ENCODE measurements at regions of chr6 and their contacts with region 1.

Region 1: GRCh38 chr6:108250240-108250866 is 10.5 kb downstream of the SNX3 start:
- DNase-seq: no peak
- ATAC-seq: peak; percentile 65
- H3K4me3 Mint-ChIP-seq: no peak overlapping the region
- H3K27ac Mint-ChIP-seq: peak overlapping the region; percentile 5
- H3K4me1 Mint-ChIP-seq: peaks cover 84% of the 10 kb centered on the region
- H3K27me3 Mint-ChIP-seq: no peaks in the 10 kb centered on the region
- CTCF ChIP-seq: no peak

Region 2: GRCh38 chr6:108145639-108146038 is 104.7 kb before region 1 on chr6:
- CTCF ChIA-PET with region 1: no interaction called
- POLR2A ChIA-PET with region 1: interaction called, 10 read pairs
- intact Hi-C with region 1: no loop called
- DNase-seq: no peak
- ATAC-seq: no peak
- H3K4me3 Mint-ChIP-seq: no peak overlapping the region
- H3K27ac Mint-ChIP-seq: no peak overlapping the region
- H3K4me1 Mint-ChIP-seq: peaks cover 10% of the 10 kb centered on the region
- H3K27me3 Mint-ChIP-seq: peaks cover 21% of the 10 kb centered on the region
- CTCF ChIP-seq: no peak

Region 3: GRCh38 chr6:108274546-108274945 is 24.2 kb after region 1 on chr6:
- CTCF ChIA-PET with region 1: no interaction called
- POLR2A ChIA-PET with region 1: no interaction called
- intact Hi-C with region 1: no loop called
- DNase-seq: no peak
- ATAC-seq: no peak
- H3K4me3 Mint-ChIP-seq: no peak overlapping the region
- H3K27ac Mint-ChIP-seq: no peak overlapping the region
- H3K4me1 Mint-ChIP-seq: no peaks in the 10 kb centered on the region
- H3K27me3 Mint-ChIP-seq: no peaks in the 10 kb centered on the region
- CTCF ChIP-seq: no peak

Region 4: DNA sequence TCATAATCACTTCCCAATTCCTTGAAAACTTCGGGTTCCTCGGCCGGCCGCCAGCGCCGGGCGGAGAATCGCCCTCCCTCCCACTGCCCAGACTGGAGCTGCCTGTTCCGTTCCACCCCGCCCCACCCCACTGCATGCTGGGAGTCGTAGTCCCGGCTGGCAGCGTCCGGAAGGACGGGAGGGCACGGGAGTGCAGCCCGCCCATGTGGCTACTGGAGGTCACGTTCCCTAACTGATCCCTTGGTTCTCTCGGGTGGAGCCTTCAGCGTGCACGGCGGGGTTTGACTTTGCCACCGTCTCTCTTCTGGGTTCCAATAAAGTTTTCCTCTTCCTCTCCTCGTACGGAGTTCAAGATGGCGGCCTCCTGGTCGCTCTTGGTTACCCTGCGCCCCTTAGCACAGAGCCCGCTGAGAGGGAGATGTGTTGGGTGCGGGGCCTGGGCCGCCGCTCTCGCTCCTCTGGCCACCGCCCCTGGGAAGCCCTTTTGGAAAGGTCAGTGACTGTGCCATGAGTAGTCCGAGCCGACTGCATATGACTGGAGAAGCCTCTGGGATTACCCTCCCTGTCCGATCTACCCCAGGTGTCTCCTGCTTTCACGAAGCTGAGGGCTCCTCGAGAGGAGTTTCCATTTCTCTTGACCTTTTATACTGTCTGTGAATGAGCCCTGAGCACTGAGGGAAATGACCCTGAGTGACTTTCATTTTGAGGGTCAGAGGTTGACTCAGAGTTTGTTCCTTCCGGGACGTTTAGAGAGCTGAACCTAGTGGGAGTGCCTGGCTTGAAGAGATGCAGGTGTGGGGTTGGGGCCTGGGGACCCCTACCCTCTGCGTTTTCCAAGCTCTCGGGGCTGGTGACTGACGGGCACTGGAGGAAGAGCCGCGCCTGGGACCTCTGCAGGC is 44.6 kb after region 1 on chr6 and contains the start of gene AFG1L:
- CTCF ChIA-PET with region 1: no interaction called
- POLR2A ChIA-PET with region 1: interaction called, 11 read pairs
- intact Hi-C with region 1: no loop called
- DNase-seq: peak; percentile 89
- ATAC-seq: peak; percentile 92
- H3K4me3 Mint-ChIP-seq: peak within 1 kb of the TSS; percentile 99
- H3K27ac Mint-ChIP-seq: peak within 1 kb of the TSS; percentile 100
- H3K4me1 Mint-ChIP-seq: peaks cover 30% of the 10 kb centered on the region
- H3K27me3 Mint-ChIP-seq: no peaks in the 10 kb centered on the region
- CTCF ChIP-seq: no peak
- total RNA-seq, gene AFG1L: 7.5 and 10.3 TPM in 2 replicates

Region 5: DNA sequence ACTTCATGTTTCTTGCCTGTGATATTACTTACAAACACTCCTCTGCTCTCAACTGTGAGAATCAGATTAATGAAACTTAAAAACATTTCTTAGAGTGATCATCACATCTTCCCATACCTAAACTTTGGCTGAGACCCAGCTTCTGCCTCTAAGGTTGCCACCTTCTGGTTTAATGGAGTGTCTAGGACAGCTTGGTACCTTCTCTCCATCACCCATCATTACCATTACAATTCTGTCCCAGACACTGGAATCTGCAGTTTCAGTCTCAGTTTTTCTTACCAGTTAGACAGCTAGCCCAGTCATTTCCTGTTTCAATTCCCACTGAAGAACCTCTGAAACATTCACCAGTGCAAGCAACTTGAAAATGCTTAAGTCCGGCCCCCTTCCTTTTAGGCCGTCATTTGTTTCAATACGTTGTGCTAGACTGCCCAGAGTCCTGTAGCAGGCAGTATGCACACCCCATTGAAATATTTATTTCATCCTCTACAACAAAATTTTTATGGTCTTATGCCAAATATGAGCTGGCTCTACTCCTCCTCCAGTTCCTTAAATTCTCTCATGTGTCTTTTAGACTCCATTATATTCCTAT is 203.3 kb after region 1 on chr6:
- CTCF ChIA-PET with region 1: no interaction called
- POLR2A ChIA-PET with region 1: no interaction called
- intact Hi-C with region 1: loop called (anchors 1 kb)
- DNase-seq: no peak
- ATAC-seq: peak; percentile 73
- H3K4me3 Mint-ChIP-seq: peak overlapping the region; percentile 32
- H3K27ac Mint-ChIP-seq: peak overlapping the region; percentile 70
- H3K4me1 Mint-ChIP-seq: peaks cover 8% of the 10 kb centered on the region
- H3K27me3 Mint-ChIP-seq: no peaks in the 10 kb centered on the region
- CTCF ChIP-seq: no peak

Region 6: DNA sequence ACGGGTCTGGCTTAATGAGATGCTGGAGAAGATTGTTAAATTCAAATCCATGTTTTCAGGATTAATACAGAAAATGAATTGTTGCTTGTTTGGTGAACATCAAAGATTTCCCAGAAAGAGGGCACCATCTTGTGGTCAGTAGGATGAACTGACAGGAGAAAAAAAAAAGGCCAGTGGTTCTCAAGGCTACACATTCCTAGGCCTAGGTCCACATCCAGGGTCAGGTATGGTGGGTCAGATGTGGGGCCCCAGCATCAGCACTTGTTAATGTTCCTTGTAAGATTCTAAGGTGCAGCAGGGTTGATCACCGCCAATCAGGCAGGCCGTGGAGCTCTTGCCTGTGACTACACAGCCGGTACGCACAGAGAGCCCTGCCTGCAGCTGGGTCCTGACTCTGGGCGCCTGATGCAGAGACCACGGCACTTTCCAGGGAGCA is 276.4 kb after region 1 on chr6:
- CTCF ChIA-PET with region 1: no interaction called
- POLR2A ChIA-PET with region 1: no interaction called
- intact Hi-C with region 1: loop called (anchors 1 kb)
- DNase-seq: no peak
- ATAC-seq: peak; percentile 45
- H3K4me3 Mint-ChIP-seq: no peak overlapping the region
- H3K27ac Mint-ChIP-seq: no peak overlapping the region
- H3K4me1 Mint-ChIP-seq: no peaks in the 10 kb centered on the region
- H3K27me3 Mint-ChIP-seq: no peaks in the 10 kb centered on the region
- CTCF ChIP-seq: peak; percentile 79